Calu3 (cell line): ENCODE measurements at regions of chr14 and their contacts with region 1.

Region 1: DNA sequence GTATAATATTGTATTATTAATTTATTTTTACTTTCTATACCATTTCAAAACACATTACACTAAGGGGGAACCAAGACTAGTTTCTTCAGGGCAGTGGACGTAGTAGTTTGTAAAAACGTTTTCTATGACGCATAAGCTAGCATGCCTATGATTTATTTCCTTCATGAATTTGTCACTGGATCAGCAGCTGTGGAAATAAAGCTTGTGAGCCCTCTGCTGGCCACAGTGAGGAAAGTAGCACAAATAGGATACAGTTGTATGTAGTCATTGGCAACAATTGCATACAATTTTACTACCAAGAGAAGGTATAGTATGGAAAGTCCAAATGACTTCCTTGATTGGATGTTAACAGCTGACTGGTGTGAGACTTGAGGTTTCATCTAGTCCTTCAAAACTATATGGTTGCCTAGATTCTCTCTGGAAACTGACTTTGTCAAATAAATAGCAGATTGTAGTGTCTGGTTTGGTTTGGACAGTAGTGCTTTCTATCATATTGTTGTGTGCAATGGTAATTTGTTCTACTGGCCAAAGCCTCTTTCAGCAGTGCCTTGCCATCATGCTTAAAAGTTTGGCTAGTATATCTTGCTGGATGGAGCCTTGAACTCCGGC is 24.3 kb upstream of the PLEKHD1 start:
- DNase-seq: peak; percentile 71
- H3K4me3 Mint-ChIP-seq: no peak overlapping the region
- H3K27ac Mint-ChIP-seq: no peak overlapping the region
- H3K4me1 Mint-ChIP-seq: peaks cover 10% of the 10 kb centered on the region
- H3K27me3 Mint-ChIP-seq: no peaks in the 10 kb centered on the region
- CTCF ChIP-seq: peak; percentile 58

Region 2: DNA sequence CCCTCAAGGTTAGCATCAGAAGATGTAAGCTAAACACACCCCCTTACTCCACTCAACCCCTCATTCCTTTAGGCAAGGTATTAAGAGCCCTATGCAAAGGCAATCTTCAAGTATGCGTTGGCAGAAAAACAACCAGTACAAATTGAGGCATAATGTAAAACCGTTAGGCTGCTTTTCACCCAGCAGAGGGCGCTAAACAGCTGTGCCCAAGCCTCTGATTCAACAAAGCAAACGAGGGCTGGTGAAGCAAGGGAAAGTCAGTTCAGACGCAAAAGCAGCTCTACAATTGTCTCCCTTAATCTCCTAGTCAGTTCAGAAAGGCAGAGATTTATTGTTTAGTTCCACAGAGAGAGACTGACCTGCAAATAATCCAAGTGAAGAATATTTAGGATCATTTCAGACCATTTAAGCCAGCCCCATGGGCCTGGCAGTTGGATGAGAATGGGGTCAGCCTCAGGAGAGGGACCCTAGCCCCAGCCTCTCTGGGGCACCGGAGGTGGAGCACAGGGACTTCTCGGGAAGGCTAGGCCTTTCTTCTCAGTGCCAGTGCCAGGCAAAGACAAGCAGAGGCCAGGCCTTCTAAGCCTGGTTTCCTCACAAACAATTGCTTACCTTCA is 330.8 kb before region 1 on chr14:
- CTCF ChIA-PET with region 1: interaction called, 4 read pairs
- intact Hi-C with region 1: loop called (anchors 5 kb)
- DNase-seq: peak; percentile 64
- H3K4me3 Mint-ChIP-seq: no peak overlapping the region
- H3K27ac Mint-ChIP-seq: no peak overlapping the region
- H3K4me1 Mint-ChIP-seq: peaks cover 17% of the 10 kb centered on the region
- H3K27me3 Mint-ChIP-seq: no peaks in the 10 kb centered on the region
- CTCF ChIP-seq: peak; percentile 57

Region 3: GRCh38 chr14:69242311-69243224 is 217.6 kb before region 1 on chr14:
- CTCF ChIA-PET with region 1: interaction called, 22 read pairs
- intact Hi-C with region 1: loop called (anchors 1 kb)
- DNase-seq: peak; percentile 61
- H3K4me3 Mint-ChIP-seq: no peak overlapping the region
- H3K27ac Mint-ChIP-seq: no peak overlapping the region
- H3K4me1 Mint-ChIP-seq: peaks cover 9% of the 10 kb centered on the region
- H3K27me3 Mint-ChIP-seq: no peaks in the 10 kb centered on the region
- CTCF ChIP-seq: peak; percentile 52

Region 4: GRCh38 chr14:69260861-69261564 is 199.2 kb before region 1 on chr14:
- CTCF ChIA-PET with region 1: interaction called, 12 read pairs
- intact Hi-C with region 1: loop called (anchors 5 kb)
- DNase-seq: peak; percentile 78
- H3K4me3 Mint-ChIP-seq: peak overlapping the region; percentile 77
- H3K27ac Mint-ChIP-seq: no peak overlapping the region
- H3K4me1 Mint-ChIP-seq: no peaks in the 10 kb centered on the region
- H3K27me3 Mint-ChIP-seq: peaks cover 75% of the 10 kb centered on the region
- CTCF ChIP-seq: peak; percentile 81

Region 5: DNA sequence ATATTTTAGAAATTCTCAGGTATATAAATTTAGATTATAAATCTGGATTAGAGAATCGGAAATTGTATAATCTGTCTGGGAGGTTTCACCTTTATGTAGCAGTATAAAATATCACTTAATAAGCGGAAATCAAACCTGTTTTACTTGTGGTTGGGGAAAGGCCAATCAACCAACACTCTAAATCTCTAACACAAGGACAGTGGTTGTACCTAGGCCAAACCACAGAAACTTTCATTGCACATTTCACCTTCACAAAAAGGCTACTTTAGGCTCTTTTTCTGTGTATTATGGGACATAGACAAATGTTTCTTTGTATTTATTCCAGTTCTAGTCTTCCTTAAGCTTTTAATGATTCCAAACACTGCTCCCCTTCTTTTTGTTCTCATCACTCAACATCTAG is 81.9 kb before region 1 on chr14:
- CTCF ChIA-PET with region 1: interaction called, 3 read pairs
- intact Hi-C with region 1: loop called (anchors 1 kb)
- DNase-seq: peak; percentile 17
- H3K4me3 Mint-ChIP-seq: no peak overlapping the region
- H3K27ac Mint-ChIP-seq: peak overlapping the region; percentile 35
- H3K4me1 Mint-ChIP-seq: peaks cover 24% of the 10 kb centered on the region
- H3K27me3 Mint-ChIP-seq: no peaks in the 10 kb centered on the region
- CTCF ChIP-seq: no peak

Region 6: DNA sequence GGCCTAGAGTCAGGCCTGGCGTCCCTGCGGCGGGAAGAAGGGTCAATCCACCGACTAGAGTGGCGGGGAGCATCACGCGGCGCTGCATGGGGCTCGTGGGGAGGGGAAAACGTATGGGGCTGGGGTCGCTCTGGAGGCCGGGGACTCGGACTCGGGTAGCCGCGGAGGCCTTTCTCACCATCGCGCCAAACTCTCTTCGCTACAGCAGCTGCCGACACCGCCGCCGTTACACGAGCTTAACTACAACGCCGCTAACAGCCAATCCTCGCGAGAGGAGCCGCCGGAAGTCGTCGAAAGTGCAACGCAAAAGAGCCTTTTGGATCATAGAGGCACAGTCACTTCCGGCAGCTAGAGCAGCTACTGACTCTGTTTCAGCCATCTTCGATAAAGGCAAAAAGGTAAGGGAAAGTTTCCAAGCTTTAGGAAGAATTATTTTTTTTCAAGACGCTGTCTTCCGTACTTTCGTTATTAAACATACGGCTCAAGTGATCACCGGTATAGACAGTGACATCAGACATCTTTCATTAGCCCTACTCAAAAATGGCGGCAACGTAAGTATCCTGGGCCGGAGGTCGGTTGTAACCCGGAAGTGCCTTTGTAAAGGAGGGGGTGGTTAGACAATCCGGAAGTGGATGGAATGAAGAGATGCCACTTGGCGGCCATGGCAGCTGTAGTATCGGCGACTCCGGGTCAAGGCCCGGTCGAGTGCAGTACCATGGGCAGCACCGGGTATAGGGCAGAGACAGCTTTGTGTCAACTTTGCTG is 62.0 kb before region 1 on chr14 and contains the starts of genes ERH and SLC39A9:
- CTCF ChIA-PET with region 1: interaction called, 10 read pairs
- intact Hi-C with region 1: no loop called
- DNase-seq: peak; percentile 87
- H3K4me3 Mint-ChIP-seq: peak within 1 kb of the TSS; percentile 74
- H3K27ac Mint-ChIP-seq: peak within 1 kb of the TSS; percentile 98
- H3K4me1 Mint-ChIP-seq: peaks cover 22% of the 10 kb centered on the region
- H3K27me3 Mint-ChIP-seq: no peaks in the 10 kb centered on the region
- CTCF ChIP-seq: no peak
- total RNA-seq, gene ERH: 313 and 343 TPM in 2 replicates
- total RNA-seq, gene SLC39A9: 88.3 and 94.7 TPM in 2 replicates